PC-9 (cell line): ENCODE measurements at regions of chr5 and their contacts with region 1.

Region 1: DNA sequence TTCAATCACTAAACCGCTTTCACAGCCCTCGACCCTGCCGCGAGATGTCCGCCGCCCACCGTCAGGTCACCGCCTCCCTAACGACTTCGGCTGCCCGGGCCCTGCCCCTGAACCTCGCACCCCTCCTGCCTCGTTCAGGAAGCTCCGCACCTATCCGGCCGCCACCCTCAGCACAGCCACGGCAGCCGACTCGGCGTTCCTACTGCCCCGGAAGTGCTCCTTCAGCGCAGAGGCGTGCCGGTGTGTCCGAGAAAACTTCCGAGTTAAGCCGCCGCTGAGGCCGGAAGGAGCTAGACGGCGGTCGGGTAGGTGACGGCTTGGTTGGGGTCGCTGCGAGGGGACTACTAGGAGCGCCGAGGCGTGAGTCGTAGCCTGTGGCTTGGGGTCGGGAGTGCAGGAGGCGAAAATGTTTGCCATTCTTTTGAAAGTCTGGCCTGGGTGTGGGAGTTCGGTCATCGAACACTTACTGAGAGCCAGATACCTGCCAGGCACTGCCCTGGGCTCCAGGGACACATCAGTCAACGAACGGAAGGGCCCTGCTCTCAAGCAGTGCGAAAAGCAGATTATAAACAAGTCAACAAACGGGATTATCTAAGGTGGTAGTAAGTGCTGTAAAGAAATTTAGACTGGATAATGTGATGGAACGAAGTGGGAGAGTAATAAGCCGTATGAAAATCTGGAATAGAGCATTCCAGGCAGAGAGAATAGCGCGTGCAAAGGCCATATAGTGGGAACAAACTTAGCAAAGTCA is at the starts of genes FAM114A2 and MFAP3:
- DNase-seq: peak; percentile 84 to 90
- H3K4me3 ChIP-seq: peak within 1 kb of the TSS; percentile 85
- H3K27ac ChIP-seq: peak within 1 kb of the TSS; percentile 52
- H3K4me1 ChIP-seq: peaks cover 20% of the 10 kb centered on the region
- H3K27me3 ChIP-seq: no peaks in the 10 kb centered on the region
- CTCF ChIP-seq: no peak
- total RNA-seq, gene FAM114A2: 17.1 and 18.9 TPM in 2 replicates
- total RNA-seq, gene MFAP3: 24.4 and 29.3 TPM in 2 replicates

Region 2: GRCh38 chr5:154025951-154026350 is 12.9 kb before region 1 on chr5:
- CTCF ChIA-PET with region 1: no interaction called
- POLR2A ChIA-PET with region 1: interaction called, 19 read pairs
- intact Hi-C with region 1: no loop called
- DNase-seq: no peak
- H3K4me3 ChIP-seq: no peak overlapping the region
- H3K27ac ChIP-seq: no peak overlapping the region
- H3K4me1 ChIP-seq: no peaks in the 10 kb centered on the region
- H3K27me3 ChIP-seq: no peaks in the 10 kb centered on the region
- CTCF ChIP-seq: no peak

Region 3: DNA sequence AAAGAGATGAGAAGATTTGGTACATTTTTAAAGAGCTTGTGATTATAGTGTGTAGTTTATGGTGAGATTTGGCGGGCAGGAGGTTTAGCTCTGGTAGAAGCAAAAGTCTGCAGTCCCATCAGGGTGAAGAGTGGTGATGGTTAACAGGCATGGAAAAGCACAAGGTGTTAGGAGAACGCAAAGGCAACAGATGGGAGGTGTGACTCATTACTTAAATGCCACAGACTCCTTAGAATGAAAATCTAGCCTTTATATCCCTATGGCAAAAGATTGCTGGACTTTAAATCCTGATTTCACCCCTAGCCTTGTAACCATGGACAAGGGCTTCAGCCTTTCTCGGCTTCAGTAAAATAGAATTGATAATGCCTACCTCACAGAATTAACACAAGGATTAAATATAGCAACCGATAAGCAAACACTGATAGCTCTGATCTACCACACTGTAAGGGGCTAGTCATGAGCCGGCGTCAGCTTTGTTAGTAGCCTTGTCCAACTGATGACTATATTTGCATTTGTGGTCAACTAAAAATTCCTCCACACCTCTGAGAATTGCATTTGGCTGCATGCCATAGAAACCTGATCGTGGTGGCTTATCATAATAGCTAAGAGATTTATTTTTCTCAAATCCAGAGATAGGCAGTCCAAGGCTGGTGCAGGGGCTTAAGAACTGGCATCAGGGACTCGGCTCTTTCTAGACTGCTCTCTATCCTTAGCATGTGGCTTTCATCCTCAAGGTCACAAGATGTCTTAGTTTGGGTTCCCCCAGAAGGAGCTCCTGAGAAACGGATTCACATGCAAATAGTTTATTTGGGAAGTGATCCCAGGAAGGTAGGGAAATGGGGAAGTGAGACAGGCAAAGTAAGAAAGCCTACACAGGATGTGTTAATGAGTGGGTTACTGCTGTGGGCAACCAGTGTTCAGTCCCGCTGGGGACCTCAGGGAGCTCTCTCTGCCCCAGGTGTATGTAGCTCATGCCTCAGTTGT is 19.5 kb after region 1 on chr5:
- CTCF ChIA-PET with region 1: no interaction called
- POLR2A ChIA-PET with region 1: no interaction called
- intact Hi-C with region 1: loop called (anchors 2 kb)
- DNase-seq: peak; percentile 77 to 87
- H3K4me3 ChIP-seq: no peak overlapping the region
- H3K27ac ChIP-seq: peak overlapping the region; percentile 47
- H3K4me1 ChIP-seq: peaks cover 21% of the 10 kb centered on the region
- H3K27me3 ChIP-seq: no peaks in the 10 kb centered on the region
- CTCF ChIP-seq: no peak